IMR-90 (cell line): ENCODE measurements at regions of chr2 and their contacts with region 1.

Region 1: GRCh38 chr2:39094852-39095306 is 26.0 kb downstream of the SOS1 start:
- DNase-seq: peak; percentile 87
- ATAC-seq: peak; percentile 90
- H3K4me3 ChIP-seq: no peak overlapping the region
- H3K27ac ChIP-seq: no peak overlapping the region
- H3K4me1 ChIP-seq: peaks cover 10% of the 10 kb centered on the region
- H3K27me3 ChIP-seq: no peaks in the 10 kb centered on the region
- CTCF ChIP-seq: no peak
- POLR2A ChIP-seq: no peak
- RAD21 ChIP-seq: no peak

Region 2: DNA sequence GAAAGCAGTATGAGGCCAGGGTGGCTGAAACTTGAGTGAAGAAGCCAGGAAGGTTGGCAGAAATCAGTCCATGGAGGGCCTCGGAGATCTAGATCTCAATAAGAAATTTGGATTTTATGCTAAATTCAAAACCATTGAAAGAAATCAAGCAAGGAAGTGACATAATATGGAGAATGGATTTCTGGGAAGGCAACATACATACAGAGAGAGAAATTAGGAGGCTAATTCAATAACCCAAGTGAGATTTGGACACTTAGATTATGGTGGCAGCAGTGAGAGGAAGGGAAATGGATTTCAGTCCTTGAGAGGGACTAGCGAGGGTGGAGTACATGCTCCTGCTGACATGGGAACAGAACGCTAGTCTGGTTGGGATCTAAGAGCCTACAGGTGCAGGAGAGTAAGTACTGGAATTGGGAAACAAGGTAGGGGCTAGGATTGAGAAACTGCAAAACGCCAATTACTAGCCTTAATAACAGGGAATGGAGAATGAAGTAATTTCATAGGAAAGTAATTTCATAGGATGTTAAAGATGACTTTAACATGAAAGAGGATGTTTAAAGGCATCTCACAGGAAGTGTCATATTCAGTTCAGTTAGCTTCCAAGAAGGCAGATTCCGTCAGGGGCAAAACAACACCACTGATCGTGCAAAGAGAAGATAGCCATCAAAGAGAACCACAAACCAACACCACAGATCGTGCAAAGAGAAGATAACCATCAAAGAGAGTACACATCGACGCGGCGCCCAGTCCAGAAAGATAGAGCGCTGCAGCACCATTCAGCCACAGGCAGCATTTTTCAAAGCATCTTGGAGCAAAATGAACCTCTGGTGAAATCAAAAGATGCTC is 121.7 kb after region 1 on chr2:
- CTCF ChIA-PET with region 1: no interaction called
- POLR2A ChIA-PET with region 1: no interaction called
- dilution Hi-C with region 1: loop called (anchors 25 kb)
- in situ Hi-C with region 1: no loop called
- intact Hi-C with region 1: no loop called
- DNase-seq: no peak
- ATAC-seq: no peak
- H3K4me3 ChIP-seq: no peak overlapping the region
- H3K27ac ChIP-seq: no peak overlapping the region
- H3K4me1 ChIP-seq: no peaks in the 10 kb centered on the region
- H3K27me3 ChIP-seq: no peaks in the 10 kb centered on the region
- CTCF ChIP-seq: no peak
- POLR2A ChIP-seq: no peak
- RAD21 ChIP-seq: no peak

Region 3: GRCh38 chr2:39300044-39300978 is 205.4 kb after region 1 on chr2:
- CTCF ChIA-PET with region 1: no interaction called
- POLR2A ChIA-PET with region 1: no interaction called
- dilution Hi-C with region 1: no loop called
- in situ Hi-C with region 1: no loop called
- intact Hi-C with region 1: no loop called
- DNase-seq: no peak
- ATAC-seq: no peak
- H3K4me3 ChIP-seq: no peak overlapping the region
- H3K27ac ChIP-seq: no peak overlapping the region
- H3K4me1 ChIP-seq: no peaks in the 10 kb centered on the region; the same call in 1 of the 2 replicates
- H3K27me3 ChIP-seq: no peaks in the 10 kb centered on the region
- CTCF ChIP-seq: no peak
- POLR2A ChIP-seq: no peak
- RAD21 ChIP-seq: no peak